GM10248 (cell line): ENCODE measurements at regions of chr11 and their contacts with region 1.

Region 1: DNA sequence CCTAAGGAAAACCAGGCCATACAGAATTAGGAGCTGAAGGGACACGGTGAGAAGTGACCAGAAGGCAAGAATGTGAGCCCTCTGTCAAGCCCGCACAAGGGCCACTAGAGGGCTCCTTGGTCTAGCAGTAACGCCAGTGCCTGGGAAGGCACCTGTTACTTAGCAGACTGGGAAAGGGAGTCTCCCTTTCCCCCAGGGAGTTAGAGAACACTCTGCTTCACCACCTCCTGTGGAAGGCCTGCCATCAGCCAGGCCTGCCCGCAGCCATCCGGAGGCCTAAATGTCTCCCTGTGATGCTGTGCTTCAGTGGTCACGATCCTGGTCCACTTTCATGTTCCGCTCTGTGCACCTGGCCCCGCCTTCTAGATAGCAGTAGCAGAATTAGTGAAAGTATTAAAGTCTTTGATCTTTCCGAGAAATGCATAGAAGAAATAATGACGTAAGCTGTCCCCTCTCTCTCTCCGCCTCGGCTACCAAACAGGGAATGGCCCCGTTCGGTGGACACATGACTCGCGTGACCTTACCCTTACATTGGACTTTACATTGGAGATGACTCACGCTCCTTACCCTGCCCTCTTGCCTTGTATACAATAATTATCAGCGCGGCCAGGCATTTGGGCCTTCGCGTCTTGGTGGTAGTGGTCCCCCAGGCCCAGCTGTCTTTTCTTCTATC is 10.7 kb upstream of the GSTP1 start:
- DNase-seq: no peak
- CTCF ChIP-seq: peak; percentile 76

Region 2: DNA sequence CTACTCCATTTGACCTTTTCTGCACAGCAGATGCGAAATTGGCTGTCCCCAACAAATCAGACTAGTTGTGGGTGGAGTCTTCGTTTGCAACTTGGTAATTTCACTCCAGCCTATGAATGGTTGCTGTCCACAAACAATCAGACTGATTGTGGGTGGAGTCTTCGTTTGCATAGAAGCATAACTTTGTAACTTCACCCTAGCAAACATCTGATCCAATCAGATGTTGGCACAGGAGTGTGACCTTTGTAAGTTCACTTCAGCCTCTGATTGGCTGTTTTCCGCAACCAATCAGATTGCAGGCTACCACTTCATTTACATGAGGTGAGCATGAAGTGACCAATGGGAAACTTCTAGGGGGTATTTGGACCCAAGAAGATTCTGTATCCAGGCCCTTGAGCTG is 33.3 kb before region 1 on chr11:
- CTCF ChIA-PET with region 1: no interaction called
- POLR2A ChIA-PET with region 1: no interaction called
- DNase-seq: no peak
- CTCF ChIP-seq: no peak

Region 3: DNA sequence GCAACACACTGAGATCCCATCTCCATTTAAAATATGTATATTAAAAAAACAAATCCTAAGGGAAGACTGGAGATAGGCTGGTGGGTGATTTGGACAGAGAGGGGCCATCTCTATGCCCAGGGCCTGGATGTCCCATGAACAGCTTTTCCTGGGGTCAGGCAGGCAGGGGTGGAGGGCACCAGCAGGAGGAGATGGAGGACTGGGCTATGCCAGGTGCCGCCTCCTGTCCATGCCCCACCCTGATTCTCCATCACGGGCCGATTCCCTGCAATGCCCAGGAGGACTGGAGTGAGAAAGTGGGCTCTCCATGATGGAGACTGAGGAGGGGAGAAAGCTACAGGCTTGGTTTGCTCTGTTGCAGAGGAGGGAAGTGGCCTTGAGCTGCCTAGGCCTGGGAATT is 13.0 kb before region 1 on chr11:
- CTCF ChIA-PET with region 1: interaction called, 11 read pairs
- POLR2A ChIA-PET with region 1: no interaction called
- DNase-seq: no peak
- CTCF ChIP-seq: no peak

Region 4: GRCh38 chr11:67583247-67584204 is 10.6 kb after region 1 on chr11 and contains the start of gene GSTP1:
- CTCF ChIA-PET with region 1: interaction called, 23 read pairs
- POLR2A ChIA-PET with region 1: interaction called, 3 read pairs
- DNase-seq: peak; percentile 91
- CTCF ChIP-seq: peak; percentile 66

Region 5: GRCh38 chr11:67613960-67614715 is 41.3 kb after region 1 on chr11:
- CTCF ChIA-PET with region 1: interaction called, 16 read pairs
- POLR2A ChIA-PET with region 1: no interaction called
- DNase-seq: peak; percentile 87
- CTCF ChIP-seq: peak; percentile 40